AG04450 (cell line): ENCODE measurements at regions of chr14 and their contacts with region 1.

Region 1: DNA sequence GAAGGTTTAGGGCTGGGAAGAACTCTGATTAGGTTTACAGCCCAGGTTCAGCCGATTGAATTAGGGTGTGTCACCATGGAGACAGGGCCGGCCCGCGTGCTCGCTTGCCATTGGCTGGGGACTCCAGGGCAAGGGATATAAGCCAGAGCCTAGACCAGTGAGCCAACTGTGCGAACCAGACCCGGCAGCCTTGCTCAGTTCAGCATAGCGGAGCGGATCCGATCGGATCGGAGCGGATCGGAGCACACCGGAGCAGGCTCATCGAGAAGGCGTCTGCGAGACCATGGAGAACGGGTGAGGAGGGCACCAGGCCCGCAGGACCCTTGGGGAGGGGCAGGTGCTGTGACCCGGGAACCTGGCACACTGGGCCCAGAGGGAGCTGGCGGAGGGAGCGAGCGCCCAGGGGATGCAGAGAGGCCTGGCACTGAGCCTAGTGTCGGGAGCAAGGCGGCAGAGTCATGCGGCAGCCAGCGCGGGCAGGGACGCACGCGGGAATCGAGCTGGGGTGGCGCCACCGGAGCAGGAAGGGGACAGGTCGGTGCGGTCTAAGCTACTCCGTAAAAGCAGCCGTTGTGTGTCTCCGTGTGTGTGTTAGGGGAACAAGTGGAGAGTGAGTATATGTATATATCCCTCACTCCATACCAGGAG is at the start of gene PNP:
- DNase-seq: peak; percentile 65
- H3K4me3 ChIP-seq: peak within 1 kb of the TSS; percentile 95
- H3K27ac ChIP-seq: peak within 1 kb of the TSS; percentile 70
- H3K27me3 ChIP-seq: no peaks in the 10 kb centered on the region
- CTCF ChIP-seq: no peak
- polyA plus RNA-seq, gene PNP: 23.1 and 25.3 TPM in 2 replicates

Region 2: GRCh38 chr14:20454516-20455354 is 14.6 kb before region 1 on chr14 and contains the starts of genes APEX1 and OSGEP:
- CTCF ChIA-PET with region 1: no interaction called
- POLR2A ChIA-PET with region 1: interaction called, 30 read pairs
- DNase-seq: peak; percentile 98
- H3K4me3 ChIP-seq: peak within 1 kb of the TSS; percentile 91
- H3K27ac ChIP-seq: peak within 1 kb of the TSS; percentile 99
- H3K27me3 ChIP-seq: no peaks in the 10 kb centered on the region
- CTCF ChIP-seq: no peak
- polyA plus RNA-seq, gene APEX1: 240 and 274 TPM in 2 replicates
- polyA plus RNA-seq, gene OSGEP: 23.6 and 29.2 TPM in 2 replicates